Heart left ventricle (tissue), 16 donors: ENCODE measurements at regions of chr11 and their contacts with region 1.

Region 1: GRCh38 chr11:965206-965775 is 39.6 kb downstream of the AP2A2 start:
- DNase-seq: no peak
- ATAC-seq: no peak
- H3K4me3 ChIP-seq: no peak overlapping the region
- H3K27ac ChIP-seq: no peak overlapping the region
- H3K4me1 ChIP-seq: peaks cover 0 to 22% (median 6%) of the 10 kb centered on the region in 12 donors
- H3K27me3 ChIP-seq: no peaks in the 10 kb centered on the region
- CTCF ChIP-seq: no peak
- POLR2A ChIP-seq: no peak

Region 2: GRCh38 chr11:727859-728748 is 237.2 kb before region 1 on chr11:
- intact Hi-C with region 1: no loop called
- DNase-seq: peak; percentile 68 to 88 (median 85)
- ATAC-seq: peak; percentile 69 to 92 (median 86)
- H3K4me3 ChIP-seq: no peak overlapping the region
- H3K27ac ChIP-seq: peak overlapping the region in 1 of 12 donors; percentile 1
- H3K4me1 ChIP-seq: peaks cover 0 to 30% (median 22%) of the 10 kb centered on the region in 12 donors
- H3K27me3 ChIP-seq: peaks cover 18 to 60% (median 29%) of the 10 kb centered on the region in 9 donors
- CTCF ChIP-seq: peak; percentile 90 to 99 (median 94)
- POLR2A ChIP-seq: no peak

Region 3: GRCh38 chr11:925496-926321 is 39.6 kb before region 1 on chr11 and contains the start of gene AP2A2:
- intact Hi-C with region 1: loop called in 1 of 10 experiments (anchors 5 kb)
- DNase-seq: peak; percentile 91 to 96 (median 92)
- ATAC-seq: peak; percentile 32 to 95 (median 89)
- H3K4me3 ChIP-seq: peak within 1 kb of the TSS; percentile 62 to 98 (median 84)
- H3K27ac ChIP-seq: peak within 1 kb of the TSS; percentile 65 to 94 (median 92)
- H3K4me1 ChIP-seq: peaks cover under 1 to 53% (median 36%) of the 10 kb centered on the region in 12 donors
- H3K27me3 ChIP-seq: no peaks in the 10 kb centered on the region
- CTCF ChIP-seq: peak; percentile 41 to 93 (median 82)
- POLR2A ChIP-seq: peak in 1 of 2 donors; percentile 76
- total RNA-seq, gene AP2A2: 30.2 to 71.4 (median 40.0) TPM

Region 4: GRCh38 chr11:942823-943222 is 22.5 kb before region 1 on chr11:
- intact Hi-C with region 1: no loop called
- DNase-seq: peak in 1 of 5 donors; percentile 29
- ATAC-seq: peak in 2 of 4 donors; percentile 33 to 61
- H3K4me3 ChIP-seq: no peak overlapping the region
- H3K27ac ChIP-seq: no peak overlapping the region
- H3K4me1 ChIP-seq: peaks cover 0 to 49% (median 22%) of the 10 kb centered on the region in 12 donors
- H3K27me3 ChIP-seq: no peaks in the 10 kb centered on the region
- CTCF ChIP-seq: no peak
- POLR2A ChIP-seq: no peak

Region 5: GRCh38 chr11:1309498-1310317 is 344.4 kb after region 1 on chr11 and contains the start of gene TOLLIP:
- intact Hi-C with region 1: no loop called
- DNase-seq: peak; percentile 96 to 99 (median 97)
- ATAC-seq: peak; percentile 96 to 99 (median 97)
- H3K4me3 ChIP-seq: peak within 1 kb of the TSS; percentile 58 to 98 (median 85)
- H3K27ac ChIP-seq: peak within 1 kb of the TSS; percentile 86 to 97 (median 94)
- H3K4me1 ChIP-seq: peaks cover 0 to 43% (median 27%) of the 10 kb centered on the region in 12 donors
- H3K27me3 ChIP-seq: no peaks in the 10 kb centered on the region
- CTCF ChIP-seq: peak in 7 of 12 donors; percentile 8 to 56 (median 41)
- POLR2A ChIP-seq: peak; percentile 6 to 92
- total RNA-seq, gene TOLLIP: 36.9 to 57.2 (median 44.9) TPM